ENCODE measurements at regions of chr9 and their contacts with region 1.

Region 1: GRCh38 chr9:36798350-36799065 is 225.8 kb downstream of the MELK start:
- DNase-seq: peak in 2 of 10 donors; percentile 54 to 90

Region 2: GRCh38 chr9:36862206-36863145 is 64.0 kb after region 1 on chr9:
- intact Hi-C with region 1: loop called (anchors 10 kb)
- DNase-seq: peak in 9 of 10 donors; percentile 42 to 93 (median 62)

Region 3: GRCh38 chr9:36995927-36996705 is 197.6 kb after region 1 on chr9:
- intact Hi-C with region 1: loop called (anchors 10 kb)
- DNase-seq: peak in 5 of 10 donors; percentile 7 to 90 (median 44)

Region 4: DNA sequence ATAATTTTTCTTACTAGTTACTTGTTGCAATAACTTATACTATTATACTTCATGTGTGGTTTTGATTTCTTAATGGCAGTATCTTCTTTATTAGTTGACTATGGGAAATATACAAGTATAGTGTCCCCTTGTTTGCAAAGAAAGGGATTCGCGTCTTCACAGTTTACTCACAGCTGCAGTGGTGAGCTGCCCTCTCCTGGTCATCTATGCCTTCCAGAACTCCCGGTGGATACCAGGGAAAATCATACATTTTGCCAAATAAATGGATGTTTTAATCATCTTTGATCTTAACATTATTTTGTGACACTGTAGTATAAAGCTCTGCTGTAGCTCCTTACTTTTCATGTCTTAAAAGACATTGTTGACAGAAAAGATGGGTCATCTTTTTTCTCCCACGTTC is 463.9 kb after region 1 on chr9:
- intact Hi-C with region 1: loop called (anchors 5 kb)
- DNase-seq: peak in 6 of 10 donors; percentile 12 to 86 (median 21)